ENCODE measurements at regions of chr9 and their contacts with region 1.

Region 1: DNA sequence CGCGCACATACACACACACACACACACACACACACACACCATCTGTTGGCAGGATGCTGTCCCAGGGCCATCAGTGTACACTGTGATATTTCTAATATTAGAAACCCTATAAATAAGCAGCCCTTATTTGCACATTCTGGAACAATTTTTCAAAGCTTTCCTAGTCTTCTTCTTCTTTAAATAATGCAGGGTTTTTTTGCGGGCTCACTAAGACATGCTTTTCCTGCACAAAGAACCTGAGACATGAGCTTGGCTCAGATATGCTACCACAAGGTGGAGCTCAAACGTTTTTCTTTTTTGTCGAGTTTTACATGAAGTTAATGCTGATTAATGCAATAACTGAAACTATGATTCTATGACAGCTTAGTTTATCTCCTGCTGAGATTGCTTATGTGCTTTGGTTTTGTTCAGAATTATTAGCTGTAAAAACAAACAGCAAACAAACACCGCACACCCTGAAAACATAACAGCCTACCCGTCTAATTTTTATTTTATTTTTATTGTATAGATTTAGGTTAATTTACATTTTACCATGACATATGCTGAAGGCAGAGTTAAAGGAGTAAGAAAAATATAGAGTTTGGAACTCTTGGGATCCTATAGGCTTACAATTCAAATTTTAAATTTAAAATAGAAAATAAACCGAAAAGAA is 95.8 kb downstream of the ALDH1A1 start:
- ATAC-seq: peak; percentile 34 to 93 (median 55)
- H3K4me3 ChIP-seq: no peak overlapping the region
- H3K27ac ChIP-seq: no peak overlapping the region
- H3K4me1 ChIP-seq: no peaks in the 10 kb centered on the region

Region 2: GRCh38 chr9:73023025-73023541 is 166.0 kb after region 1 on chr9:
- in situ Hi-C with region 1: loop called in 2 of 9 experiments (anchors 25 kb)
- ATAC-seq: peak in 3 of 8 experiments; percentile 59 to 69 (median 66)
- H3K4me3 ChIP-seq: no peak overlapping the region
- H3K27ac ChIP-seq: no peak overlapping the region
- H3K4me1 ChIP-seq: no peaks in the 10 kb centered on the region

Region 3: DNA sequence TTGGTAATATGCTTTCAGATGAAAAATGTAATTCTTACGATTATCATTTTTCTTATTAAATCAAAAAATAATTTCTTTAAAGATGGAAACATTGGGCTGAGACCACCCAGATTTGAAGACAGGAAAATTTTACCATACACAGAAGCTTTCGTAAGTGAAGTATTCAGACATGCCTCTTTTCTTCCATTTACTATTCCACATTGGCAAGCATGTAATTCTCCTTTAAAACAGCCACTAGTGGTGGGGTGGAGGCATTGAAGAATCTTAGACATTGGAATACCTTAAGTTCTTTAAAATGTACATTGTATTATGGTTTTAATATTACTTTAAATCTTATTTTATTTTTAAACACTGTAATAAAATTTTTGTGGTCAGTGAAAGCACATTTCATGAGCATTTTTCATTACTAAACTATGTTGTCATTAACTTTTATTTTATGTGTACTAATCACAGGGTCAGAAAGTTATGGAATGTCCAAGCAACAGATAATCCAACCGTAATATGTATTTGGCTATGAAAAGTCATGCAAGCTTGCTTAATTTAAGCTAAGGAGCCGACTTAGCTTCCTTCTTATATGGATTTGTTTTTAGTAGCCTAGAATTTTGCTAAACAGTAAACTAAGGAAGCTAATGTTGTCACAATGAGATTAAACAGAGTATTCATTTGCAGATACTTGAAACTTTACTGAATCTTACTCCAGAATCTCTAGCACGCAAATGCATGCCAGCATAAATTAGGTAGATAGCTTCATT is 193.1 kb after region 1 on chr9:
- in situ Hi-C with region 1: loop called in 1 of 9 experiments (anchors 25 kb)
- ATAC-seq: peak in 6 of 8 experiments; percentile 10 to 92 (median 54)
- H3K4me3 ChIP-seq: no peak overlapping the region
- H3K27ac ChIP-seq: no peak overlapping the region
- H3K4me1 ChIP-seq: peaks cover 9 to 10% of the 10 kb centered on the region in 2 donors

Measured in motor neuron (in vitro differentiated cells).